Heart left ventricle (tissue), 16 donors: ENCODE measurements at regions of chrX and their contacts with region 1.

Region 1: DNA sequence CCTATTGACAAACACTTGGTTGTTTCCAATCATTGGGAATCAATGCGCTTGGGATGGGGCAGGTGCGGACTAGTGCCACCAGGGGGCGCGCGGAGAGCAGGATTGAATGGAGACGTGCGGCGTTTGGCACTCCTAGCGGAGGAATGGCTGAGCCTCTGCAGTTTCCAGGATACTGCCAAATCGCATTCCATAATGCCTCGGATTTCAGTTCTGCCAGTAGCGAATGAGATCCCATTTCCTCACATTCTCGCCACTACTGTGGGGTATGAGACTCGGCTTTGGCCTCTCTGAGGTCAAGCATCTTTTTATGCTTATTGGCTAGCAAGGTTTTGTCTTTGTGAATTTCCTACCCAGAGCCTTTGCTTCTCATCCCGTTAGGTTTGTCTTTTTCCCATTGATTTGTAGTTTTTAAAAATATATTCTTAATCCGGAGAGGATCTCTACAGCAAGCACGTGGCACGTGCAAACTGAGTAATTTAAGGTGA is 28.7 kb downstream of the CLDN34 start:
- DNase-seq: peak; percentile 77 to 90 (median 82)
- ATAC-seq: peak; percentile 88 to 93 (median 88)
- H3K4me3 ChIP-seq: no peak overlapping the region
- H3K27ac ChIP-seq: no peak overlapping the region
- H3K4me1 ChIP-seq: peaks cover 0 to 5% (median 0%) of the 10 kb centered on the region in 12 donors
- H3K27me3 ChIP-seq: no peaks in the 10 kb centered on the region
- CTCF ChIP-seq: peak; percentile 81 to 96 (median 90)
- POLR2A ChIP-seq: no peak

Region 2: GRCh38 chrX:9873952-9874351 is 121.9 kb before region 1 on chrX:
- intact Hi-C with region 1: loop called in 2 of 10 experiments (anchors 5 to 10 kb)
- DNase-seq: peak in 2 of 5 donors; percentile 13 to 48
- ATAC-seq: peak in 2 of 4 donors; percentile 47 to 56
- H3K4me3 ChIP-seq: no peak overlapping the region
- H3K27ac ChIP-seq: no peak overlapping the region
- H3K4me1 ChIP-seq: no peaks in the 10 kb centered on the region
- H3K27me3 ChIP-seq: peaks cover 0 to 12% (median 0%) of the 10 kb centered on the region in 9 donors
- CTCF ChIP-seq: peak; percentile 21 to 62 (median 45)
- POLR2A ChIP-seq: no peak

Region 3: DNA sequence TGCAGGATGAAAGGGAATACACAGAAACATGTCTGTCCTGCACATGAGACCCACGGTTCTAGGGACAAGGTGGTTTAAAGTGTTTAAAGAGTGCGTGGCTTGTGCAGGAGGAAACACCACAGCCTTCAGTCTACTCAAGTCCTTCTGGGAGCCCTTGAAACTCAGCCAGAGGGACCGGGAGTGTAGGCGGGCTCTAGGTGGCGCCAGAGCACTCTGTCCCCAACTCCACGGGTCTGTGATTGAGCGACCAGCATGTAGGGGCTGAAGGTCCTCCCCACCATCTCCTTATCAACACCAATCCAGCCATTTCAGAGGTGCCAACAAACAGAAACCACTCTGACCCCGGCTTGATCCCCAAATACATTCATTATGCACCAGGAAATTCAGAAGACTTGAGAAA is 110.7 kb before region 1 on chrX:
- intact Hi-C with region 1: loop called in 3 of 10 experiments (anchors 5 to 10 kb)
- DNase-seq: peak; percentile 29 to 75 (median 56)
- ATAC-seq: peak in 3 of 4 donors; percentile 67 to 78 (median 73)
- H3K4me3 ChIP-seq: no peak overlapping the region
- H3K27ac ChIP-seq: no peak overlapping the region
- H3K4me1 ChIP-seq: peaks cover 0 to 10% (median 0%) of the 10 kb centered on the region in 12 donors
- H3K27me3 ChIP-seq: peaks cover 0 to 25% (median 0%) of the 10 kb centered on the region in 9 donors
- CTCF ChIP-seq: peak; percentile 32 to 60 (median 48)
- POLR2A ChIP-seq: no peak